ENCODE measurements at regions of chr1 and their contacts with region 1.

Region 1: DNA sequence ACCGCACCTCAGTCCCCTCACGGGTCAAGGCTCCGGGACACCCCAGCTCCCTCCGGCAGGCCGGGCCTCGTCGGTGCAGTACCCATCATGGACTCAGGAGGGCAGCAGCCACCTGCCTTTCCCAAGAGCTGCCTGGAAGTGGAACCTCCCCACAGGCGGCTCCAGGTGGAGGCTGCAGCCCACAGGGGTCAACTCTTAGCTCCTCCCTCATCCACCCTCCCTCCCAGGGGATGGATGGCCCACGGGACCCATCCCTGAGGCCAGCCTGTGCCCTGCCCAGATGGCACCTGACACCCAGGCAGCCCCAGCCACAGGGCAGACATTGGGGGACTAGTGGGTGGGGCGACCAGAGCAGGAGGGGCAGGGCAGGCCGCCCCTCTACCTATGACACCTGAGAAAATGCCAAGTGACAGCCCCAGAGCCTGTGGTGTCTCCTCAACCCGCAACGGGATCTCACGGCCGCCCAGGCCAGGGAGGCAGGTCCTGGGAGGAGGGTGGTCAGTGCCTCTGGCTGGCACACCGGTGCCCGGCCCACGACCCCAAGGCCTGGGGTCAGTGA is 1.2 kb upstream of the ARHGEF16 start:
- DNase-seq: peak in 41 of 42 donors; percentile 65 to 91 (median 83)

Region 2: DNA sequence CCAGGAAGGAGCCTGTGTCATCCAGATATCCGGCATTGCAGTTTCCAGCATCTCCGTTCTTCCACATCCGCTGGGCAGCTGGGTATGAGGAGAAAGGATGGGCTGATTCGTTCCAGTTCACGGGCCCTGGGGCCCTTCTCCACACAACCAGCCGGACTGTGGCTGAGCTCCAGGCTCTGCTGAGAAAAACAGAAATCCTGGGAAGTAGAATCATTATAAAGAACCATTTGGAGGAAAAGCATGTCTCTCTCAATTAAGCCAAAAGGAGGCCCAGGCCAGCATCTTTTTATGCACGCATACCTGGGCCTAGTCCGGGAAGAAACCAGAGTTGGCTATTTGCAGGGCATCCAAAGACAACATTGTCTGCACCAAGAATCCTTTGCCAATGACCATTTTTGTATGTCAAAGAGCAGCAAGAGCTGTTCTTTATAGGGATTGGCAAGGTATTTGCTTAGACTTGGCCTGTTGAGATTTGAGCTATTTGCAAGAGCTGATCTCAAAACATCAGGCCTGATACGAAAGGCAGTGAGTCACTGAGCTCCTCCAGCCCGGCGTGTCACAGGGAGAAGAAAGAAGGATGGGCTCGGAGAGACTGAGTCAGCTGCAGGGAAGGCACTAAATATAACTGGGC is 83.7 kb before region 1 on chr1:
- intact Hi-C with region 1: no loop called
- DNase-seq: peak in 27 of 42 donors; percentile 33 to 90 (median 58)

Region 3: GRCh38 chr1:3485016-3485415 is 31.7 kb after region 1 on chr1:
- intact Hi-C with region 1: loop called (anchors 5 kb)
- DNase-seq: no peak